ENCODE measurements at regions of chr16 and their contacts with region 1.

Region 1: DNA sequence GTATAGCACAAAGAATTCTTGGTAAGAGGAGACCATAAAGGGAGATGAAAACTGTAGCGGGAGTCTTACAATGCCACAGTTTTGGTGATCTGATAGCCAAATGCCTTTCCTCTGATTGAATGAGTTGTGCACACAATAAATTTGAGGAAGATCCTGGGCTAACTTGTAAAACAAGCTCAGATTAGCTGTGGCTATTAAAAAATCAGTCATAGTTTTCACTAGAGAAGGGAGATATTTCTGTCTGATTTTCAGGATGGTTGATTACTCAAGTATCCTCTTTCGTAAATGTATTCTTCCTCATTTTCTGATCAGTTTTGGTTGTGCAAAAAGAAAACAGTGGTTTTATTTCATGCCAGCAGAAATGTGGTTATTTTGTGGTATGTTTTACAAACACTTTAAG is 9.1 kb upstream of the METTL9 start:
- DNase-seq: no peak
- H3K4me3 ChIP-seq: no peak overlapping the region
- H3K27ac ChIP-seq: no peak overlapping the region
- H3K4me1 ChIP-seq: no peaks in the 10 kb centered on the region
- H3K27me3 ChIP-seq: no peaks in the 10 kb centered on the region
- CTCF ChIP-seq: no peak

Region 2: GRCh38 chr16:21646721-21647561 is 56.7 kb after region 1 on chr16:
- CTCF ChIA-PET with region 1: no interaction called
- dilution Hi-C with region 1: loop called (anchors 5 kb)
- in situ Hi-C with region 1: no loop called
- intact Hi-C with region 1: no loop called
- DNase-seq: peak; percentile 72
- H3K4me3 ChIP-seq: no peak overlapping the region
- H3K27ac ChIP-seq: no peak overlapping the region
- H3K4me1 ChIP-seq: no peaks in the 10 kb centered on the region
- H3K27me3 ChIP-seq: no peaks in the 10 kb centered on the region
- CTCF ChIP-seq: no peak